GM12878 (cell line): ENCODE measurements at regions of chr1 and their contacts with region 1.

Region 1: DNA sequence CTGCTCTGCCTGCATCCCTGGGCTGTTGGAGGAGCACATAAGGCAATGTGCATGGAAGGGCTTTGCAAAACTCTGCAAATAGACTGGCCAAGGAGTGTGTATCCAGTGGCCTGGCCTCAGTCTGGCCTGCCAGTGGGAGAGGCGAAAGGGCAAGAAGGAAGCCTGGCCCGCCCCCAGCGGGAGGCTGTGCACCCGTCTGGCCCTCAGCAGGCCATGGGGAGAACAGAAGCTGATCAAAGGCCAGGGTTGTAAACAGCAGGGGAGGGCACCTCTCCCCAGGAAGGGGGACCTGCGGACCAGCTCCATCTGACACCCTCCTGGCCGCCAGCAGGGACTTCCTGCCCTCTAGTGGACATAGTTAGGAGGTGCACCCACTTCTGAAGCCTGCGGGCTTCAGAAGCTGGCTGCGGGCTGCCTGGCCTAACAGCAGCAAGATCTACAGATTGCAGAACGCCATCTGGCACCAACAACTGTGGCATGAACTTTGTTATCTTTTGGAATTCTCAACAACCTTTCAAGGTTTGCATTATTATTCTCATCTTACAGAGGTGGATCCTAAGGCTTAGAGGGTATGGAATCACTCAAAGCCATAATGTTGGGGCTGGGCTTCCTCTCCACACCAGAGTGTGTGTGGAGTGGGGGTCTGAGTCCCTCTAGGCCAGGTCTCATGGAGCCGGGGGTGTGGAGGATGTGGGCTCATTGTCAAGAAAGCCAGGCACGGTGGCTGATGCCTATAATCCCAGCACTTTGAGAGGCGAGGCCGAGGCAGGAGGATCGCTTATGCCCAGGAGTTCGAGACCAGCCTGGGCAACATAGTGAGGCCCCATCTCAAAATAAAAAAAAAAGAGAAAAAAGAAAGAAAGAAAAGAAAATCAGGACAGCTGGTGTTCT is 18.9 kb upstream of the CDK18 start:
- DNase-seq: no peak
- ATAC-seq: peak; percentile 65
- H3K4me3 ChIP-seq: no peak overlapping the region
- H3K27ac ChIP-seq: no peak overlapping the region
- H3K4me1 ChIP-seq: peaks cover 14% of the 10 kb centered on the region
- H3K27me3 ChIP-seq: 0 out of 4 replicates have a peak, but pooled peaks cover 0 to 1% of the 10 kb centered on the region in 2 experiments
- CTCF ChIP-seq: peak; percentile 94 to 97 (median 96); a peak in 5 of 6 replicates
- EP300 ChIP-seq: no peak
- POLR2A ChIP-seq: no peak
- RAD21 ChIP-seq: peak; percentile 98

Region 2: DNA sequence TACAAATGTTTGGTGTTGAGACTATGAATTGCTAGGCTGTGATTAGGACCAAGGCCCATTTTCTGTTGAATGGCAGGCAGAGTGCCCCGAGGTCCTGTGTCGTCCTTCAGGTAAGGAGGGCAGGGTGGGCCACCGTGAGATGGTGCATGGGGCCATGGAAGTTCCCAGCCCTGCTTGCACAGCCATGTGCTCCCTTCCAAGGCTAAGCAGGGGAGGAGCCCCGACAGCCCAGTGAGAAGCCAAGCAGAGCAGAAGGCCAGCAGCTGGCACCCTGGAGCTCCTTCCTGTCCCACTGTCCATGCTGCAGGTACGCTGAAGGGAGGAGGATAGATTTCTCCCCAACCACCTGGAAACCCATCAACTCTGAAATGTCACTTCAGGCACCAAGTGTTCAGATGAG is 155.9 kb before region 1 on chr1:
- CTCF ChIA-PET with region 1: interaction called, 102 read pairs
- POLR2A ChIA-PET with region 1: no interaction called
- RAD21 ChIA-PET with region 1: interaction called, 24 read pairs
- SMC1A ChIA-PET with region 1: interaction called, 39 read pairs
- in situ Hi-C with region 1: no loop called
- intact Hi-C with region 1: no loop called
- DNase-seq: no peak
- ATAC-seq: no peak
- H3K4me3 ChIP-seq: no peak overlapping the region
- H3K27ac ChIP-seq: no peak overlapping the region
- H3K4me1 ChIP-seq: peaks cover 5% of the 10 kb centered on the region
- H3K27me3 ChIP-seq: peaks cover 2 to 6% of the 10 kb centered on the region in 2 experiments; a peak in 3 of 4 replicates
- CTCF ChIP-seq: no peak
- EP300 ChIP-seq: no peak
- POLR2A ChIP-seq: no peak
- RAD21 ChIP-seq: no peak

Region 3: GRCh38 chr1:205391386-205391785 is 94.2 kb before region 1 on chr1:
- CTCF ChIA-PET with region 1: interaction called, 420 read pairs
- POLR2A ChIA-PET with region 1: interaction called, 7 read pairs
- RAD21 ChIA-PET with region 1: interaction called, 214 read pairs
- SMC1A ChIA-PET with region 1: interaction called, 244 read pairs
- in situ Hi-C with region 1: loop called (anchors 5 kb)
- intact Hi-C with region 1: no loop called
- DNase-seq: no peak
- ATAC-seq: no peak
- H3K4me3 ChIP-seq: no peak overlapping the region
- H3K27ac ChIP-seq: no peak overlapping the region
- H3K4me1 ChIP-seq: no peaks in the 10 kb centered on the region
- H3K27me3 ChIP-seq: no peaks in the 10 kb centered on the region
- CTCF ChIP-seq: no peak
- EP300 ChIP-seq: no peak
- POLR2A ChIP-seq: no peak
- RAD21 ChIP-seq: no peak

Region 4: DNA sequence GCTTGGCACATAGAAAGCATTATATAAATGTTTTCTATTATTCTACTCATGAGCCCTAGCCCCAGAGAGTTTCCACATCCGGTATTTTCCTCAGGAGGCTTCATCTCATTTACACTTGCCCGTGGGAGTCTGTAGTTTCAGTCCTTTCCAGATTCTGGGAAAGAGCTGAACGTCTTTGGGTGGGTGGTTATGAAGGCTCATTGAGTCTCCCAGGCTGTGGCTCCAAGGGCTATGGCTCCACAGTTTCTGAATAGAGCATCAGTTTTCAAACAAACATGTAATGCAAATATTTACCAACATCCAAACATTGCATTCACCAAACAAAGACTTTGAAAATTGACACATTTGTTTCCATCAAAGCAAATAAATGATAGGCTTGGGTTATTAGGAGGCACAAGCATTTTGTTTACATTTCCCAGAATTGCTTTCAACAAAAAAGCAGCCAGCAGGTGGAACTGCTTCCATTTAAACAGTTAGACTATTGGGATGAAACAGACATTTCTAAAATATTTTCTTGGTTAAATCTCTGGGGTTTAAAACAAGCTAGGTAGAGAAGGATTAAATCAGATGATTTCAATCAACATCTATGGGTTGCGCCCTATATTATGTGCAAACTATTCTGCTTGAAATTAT is 62.5 kb before region 1 on chr1:
- CTCF ChIA-PET with region 1: interaction called, 191 read pairs
- POLR2A ChIA-PET with region 1: no interaction called
- RAD21 ChIA-PET with region 1: interaction called, 39 read pairs
- SMC1A ChIA-PET with region 1: interaction called, 21 read pairs
- in situ Hi-C with region 1: no loop called
- intact Hi-C with region 1: no loop called
- DNase-seq: no peak
- ATAC-seq: no peak
- H3K4me3 ChIP-seq: no peak overlapping the region
- H3K27ac ChIP-seq: no peak overlapping the region
- H3K4me1 ChIP-seq: no peaks in the 10 kb centered on the region
- H3K27me3 ChIP-seq: peaks cover 6% of the 10 kb centered on the region in 2 experiments; a peak in 3 of 4 replicates
- CTCF ChIP-seq: peak in 1 of 3 experiments; percentile 26; a peak in 1 of 6 replicates
- EP300 ChIP-seq: no peak
- POLR2A ChIP-seq: no peak
- RAD21 ChIP-seq: 0 out of 2 replicates have a peak, but pooled peaks have one; percentile 3

Region 5: GRCh38 chr1:205454903-205455335 is 30.7 kb before region 1 on chr1:
- CTCF ChIA-PET with region 1: interaction called, 19 read pairs
- POLR2A ChIA-PET with region 1: no interaction called
- RAD21 ChIA-PET with region 1: interaction called, 36 read pairs
- SMC1A ChIA-PET with region 1: interaction called, 4 read pairs
- in situ Hi-C with region 1: no loop called
- intact Hi-C with region 1: no loop called
- DNase-seq: no peak
- ATAC-seq: no peak
- H3K4me3 ChIP-seq: no peak overlapping the region
- H3K27ac ChIP-seq: no peak overlapping the region
- H3K4me1 ChIP-seq: no peaks in the 10 kb centered on the region
- H3K27me3 ChIP-seq: peaks cover 17 to 20% of the 10 kb centered on the region in 2 experiments
- CTCF ChIP-seq: no peak
- EP300 ChIP-seq: no peak
- POLR2A ChIP-seq: no peak
- RAD21 ChIP-seq: no peak

Region 6: GRCh38 chr1:205528887-205529825 is 43.6 kb after region 1 on chr1:
- CTCF ChIA-PET with region 1: interaction called, 891 read pairs
- POLR2A ChIA-PET with region 1: interaction called, 6 read pairs
- RAD21 ChIA-PET with region 1: interaction called, 342 read pairs
- SMC1A ChIA-PET with region 1: interaction called, 319 read pairs
- in situ Hi-C with region 1: loop called (anchors 5 kb)
- intact Hi-C with region 1: loop called (anchors 1 kb)
- DNase-seq: no peak
- ATAC-seq: peak; percentile 93
- H3K4me3 ChIP-seq: no peak overlapping the region
- H3K27ac ChIP-seq: no peak overlapping the region
- H3K4me1 ChIP-seq: no peaks in the 10 kb centered on the region
- H3K27me3 ChIP-seq: peaks cover 2 to 3% of the 10 kb centered on the region in 2 experiments; a peak in 3 of 4 replicates
- CTCF ChIP-seq: peak; percentile 78 to 96 (median 92)
- EP300 ChIP-seq: no peak
- POLR2A ChIP-seq: no peak
- RAD21 ChIP-seq: peak; percentile 78

Region 7: DNA sequence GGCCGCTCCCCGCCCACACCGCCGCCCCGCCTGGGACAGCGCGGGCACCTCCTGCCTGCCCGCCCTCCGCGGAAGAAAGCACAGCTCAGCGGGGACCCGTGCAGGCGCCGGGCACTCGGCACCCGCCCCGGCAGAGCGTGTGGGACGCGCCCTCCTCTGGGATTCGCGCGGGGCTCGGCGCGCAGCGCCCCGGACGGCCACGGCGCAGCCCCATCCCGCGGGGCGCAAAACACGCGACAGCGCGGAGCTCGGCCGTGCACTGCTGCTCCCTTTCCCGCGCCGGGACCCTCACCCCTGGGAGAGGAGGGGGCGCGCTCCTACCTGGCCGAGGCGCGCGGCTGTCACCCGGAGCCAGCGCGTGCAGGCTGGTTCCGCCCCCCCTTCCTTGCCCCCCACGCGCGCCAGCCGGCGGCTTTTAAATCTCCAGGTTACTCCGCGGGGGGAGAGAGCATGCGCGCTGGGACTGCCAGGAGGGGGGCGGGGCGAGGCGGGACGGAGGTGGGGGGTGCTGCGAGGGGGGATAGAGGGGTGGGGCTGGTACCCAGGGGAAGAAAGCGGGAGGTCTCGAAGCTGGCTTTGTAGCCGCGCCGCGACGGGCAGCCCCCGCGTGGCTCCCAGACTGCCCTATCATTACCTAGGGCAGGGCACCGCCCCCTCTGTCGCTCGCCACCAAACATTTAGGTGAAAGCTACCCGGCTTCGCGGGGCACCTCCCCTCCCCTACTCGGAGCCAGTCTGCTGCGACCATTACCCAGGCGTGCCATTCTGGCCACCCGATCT is 194.7 kb after region 1 on chr1 and contains the start of gene SLC45A3:
- CTCF ChIA-PET with region 1: no interaction called
- POLR2A ChIA-PET with region 1: no interaction called
- RAD21 ChIA-PET with region 1: no interaction called
- SMC1A ChIA-PET with region 1: no interaction called
- in situ Hi-C with region 1: no loop called
- intact Hi-C with region 1: no loop called
- DNase-seq: no peak
- ATAC-seq: peak; percentile 85
- H3K4me3 ChIP-seq: peak within 1 kb of the TSS; percentile 77
- H3K27ac ChIP-seq: no peak within 1 kb of the TSS
- H3K4me1 ChIP-seq: peaks cover 9% of the 10 kb centered on the region
- H3K27me3 ChIP-seq: peaks cover 0 to 4% of the 10 kb centered on the region in 2 experiments; a peak in 1 of 4 replicates
- CTCF ChIP-seq: no peak
- EP300 ChIP-seq: no peak
- POLR2A ChIP-seq: no peak
- RAD21 ChIP-seq: no peak
- polyA plus RNA-seq, gene SLC45A3: 0.26 to 0.60 TPM

Region 8: DNA sequence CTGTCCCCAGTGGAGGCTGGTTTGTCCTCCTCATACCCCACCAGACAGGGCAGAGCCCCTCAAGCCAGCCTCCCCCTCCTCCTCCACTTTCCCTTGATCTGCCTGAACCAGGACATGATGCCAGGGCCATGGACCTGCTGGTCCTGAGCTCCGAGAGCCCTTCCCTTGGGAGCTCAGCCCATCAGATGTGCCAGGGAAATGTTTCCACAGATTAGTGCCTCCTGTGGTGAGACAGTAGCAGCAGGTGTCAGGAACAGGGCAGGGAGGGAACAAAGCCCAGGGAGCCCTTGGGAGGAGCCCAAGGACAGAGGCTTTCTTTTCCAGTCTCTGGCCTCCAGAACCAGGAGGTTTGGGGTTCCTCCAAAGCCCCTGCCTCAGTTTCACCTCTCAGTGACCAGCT is 342.0 kb after region 1 on chr1:
- CTCF ChIA-PET with region 1: no interaction called
- POLR2A ChIA-PET with region 1: no interaction called
- RAD21 ChIA-PET with region 1: no interaction called
- SMC1A ChIA-PET with region 1: no interaction called
- in situ Hi-C with region 1: no loop called
- intact Hi-C with region 1: no loop called
- DNase-seq: no peak
- ATAC-seq: no peak
- H3K4me3 ChIP-seq: no peak overlapping the region
- H3K27ac ChIP-seq: no peak overlapping the region
- H3K4me1 ChIP-seq: no peaks in the 10 kb centered on the region; the same call in 1 of the 2 replicates
- H3K27me3 ChIP-seq: peaks cover 0 to 6% of the 10 kb centered on the region in 2 experiments; a peak in 3 of 4 replicates
- CTCF ChIP-seq: no peak
- EP300 ChIP-seq: no peak
- POLR2A ChIP-seq: no peak
- RAD21 ChIP-seq: no peak